SK-N-SH (cell line): ENCODE measurements at regions of chr5 and their contacts with region 1.

Region 1: DNA sequence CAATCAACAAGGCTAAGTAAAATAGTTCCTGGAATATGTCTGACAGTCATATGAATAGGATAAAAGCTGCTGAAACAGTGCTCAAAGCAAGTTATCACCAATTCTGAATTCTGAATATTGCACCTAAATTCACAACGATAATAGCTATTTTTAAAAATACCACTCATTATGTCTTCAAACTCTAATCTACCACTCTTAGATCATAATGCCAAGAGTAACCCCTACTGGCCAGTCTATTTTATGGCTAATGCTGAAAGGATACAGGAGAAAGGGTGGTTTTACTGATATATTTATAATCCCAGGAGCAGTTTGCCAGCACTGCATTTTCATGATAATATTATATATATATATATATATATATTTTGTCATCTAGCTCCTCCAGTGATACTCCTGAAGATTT is 232.8 kb downstream of the PDE4D start:
- DNase-seq: peak; percentile 21
- H3K4me3 ChIP-seq: no peak overlapping the region
- H3K27ac ChIP-seq: peak overlapping the region in 1 of 2 experiments; percentile 64; a peak in 2 of 4 replicates
- H3K4me1 ChIP-seq: peaks cover 4 to 22% of the 10 kb centered on the region in 2 experiments; a peak in 3 of 4 replicates
- H3K27me3 ChIP-seq: no peaks in the 10 kb centered on the region
- CTCF ChIP-seq: peak; percentile 67
- EP300 ChIP-seq: no peak
- RAD21 ChIP-seq: peak; percentile 77

Region 2: GRCh38 chr5:59390074-59390659 is 270.6 kb before region 1 on chr5:
- CTCF ChIA-PET with region 1: interaction called, 70 read pairs
- POLR2A ChIA-PET with region 1: no interaction called
- DNase-seq: no peak
- H3K4me3 ChIP-seq: no peak overlapping the region
- H3K27ac ChIP-seq: no peak overlapping the region
- H3K4me1 ChIP-seq: no peaks in the 10 kb centered on the region; a peak in 1 of 4 replicates
- H3K27me3 ChIP-seq: no peaks in the 10 kb centered on the region
- CTCF ChIP-seq: peak; percentile 88
- EP300 ChIP-seq: no peak
- RAD21 ChIP-seq: peak; percentile 78

Region 3: DNA sequence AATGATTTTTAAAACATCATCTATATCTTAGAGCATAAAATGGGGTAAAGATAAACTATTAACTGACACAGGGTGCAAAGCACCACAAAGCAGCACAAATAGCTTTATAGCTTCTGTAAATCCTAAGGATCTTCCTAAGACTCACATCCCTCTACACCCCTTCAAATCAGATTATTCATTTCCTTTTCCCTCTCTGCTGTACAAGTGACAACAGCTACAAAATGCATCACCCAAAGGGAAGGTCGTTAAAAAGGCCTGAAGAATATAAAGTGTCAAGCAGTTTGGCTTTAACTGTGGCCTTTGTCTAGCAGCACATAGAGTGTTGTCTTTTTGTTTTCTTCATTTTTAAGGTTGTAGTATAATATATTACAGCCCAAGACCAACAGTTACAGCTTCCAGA is 189.3 kb before region 1 on chr5:
- CTCF ChIA-PET with region 1: interaction called, 10 read pairs
- POLR2A ChIA-PET with region 1: no interaction called
- DNase-seq: no peak
- H3K4me3 ChIP-seq: no peak overlapping the region
- H3K27ac ChIP-seq: peak overlapping the region in 1 of 2 experiments; percentile 16; a peak in 1 of 4 replicates
- H3K4me1 ChIP-seq: peaks cover 0 to 4% of the 10 kb centered on the region in 2 experiments; a peak in 2 of 4 replicates
- H3K27me3 ChIP-seq: no peaks in the 10 kb centered on the region
- CTCF ChIP-seq: no peak
- EP300 ChIP-seq: no peak
- RAD21 ChIP-seq: no peak

Region 4: GRCh38 chr5:59587489-59588337 is 73.0 kb before region 1 on chr5:
- CTCF ChIA-PET with region 1: interaction called, 19 read pairs
- POLR2A ChIA-PET with region 1: no interaction called
- DNase-seq: peak; percentile 77
- H3K4me3 ChIP-seq: peak overlapping the region; percentile 43 to 60
- H3K27ac ChIP-seq: peak overlapping the region in 1 of 2 experiments; percentile 69; a peak in 1 of 4 replicates
- H3K4me1 ChIP-seq: peaks cover 0 to 16% of the 10 kb centered on the region in 2 experiments; a peak in 3 of 4 replicates
- H3K27me3 ChIP-seq: no peaks in the 10 kb centered on the region
- CTCF ChIP-seq: peak; percentile 29; the same call in 1 of the 2 replicates
- EP300 ChIP-seq: no peak; a peak in 1 of 4 replicates
- RAD21 ChIP-seq: peak; percentile 60

Region 5: GRCh38 chr5:59673438-59674058 is 12.8 kb after region 1 on chr5:
- CTCF ChIA-PET with region 1: interaction called, 42 read pairs
- POLR2A ChIA-PET with region 1: no interaction called
- DNase-seq: peak; percentile 24
- H3K4me3 ChIP-seq: no peak overlapping the region; a peak in 1 of 4 replicates
- H3K27ac ChIP-seq: no peak overlapping the region
- H3K4me1 ChIP-seq: peaks cover 2 to 4% of the 10 kb centered on the region in 2 experiments; a peak in 3 of 4 replicates
- H3K27me3 ChIP-seq: no peaks in the 10 kb centered on the region
- CTCF ChIP-seq: peak; percentile 89
- EP300 ChIP-seq: no peak
- RAD21 ChIP-seq: peak; percentile 90

Region 6: GRCh38 chr5:59799668-59800346 is 139.1 kb after region 1 on chr5:
- CTCF ChIA-PET with region 1: interaction called, 24 read pairs
- POLR2A ChIA-PET with region 1: no interaction called
- DNase-seq: peak; percentile 37
- H3K4me3 ChIP-seq: no peak overlapping the region; a peak in 1 of 4 replicates
- H3K27ac ChIP-seq: peak overlapping the region; percentile 46 to 74; a peak in 3 of 4 replicates
- H3K4me1 ChIP-seq: peaks cover 10 to 15% of the 10 kb centered on the region in 2 experiments
- H3K27me3 ChIP-seq: no peaks in the 10 kb centered on the region
- CTCF ChIP-seq: peak; percentile 81
- EP300 ChIP-seq: no peak
- RAD21 ChIP-seq: peak; percentile 97